ENCODE measurements at regions of chr14 and their contacts with region 1.

Region 1: DNA sequence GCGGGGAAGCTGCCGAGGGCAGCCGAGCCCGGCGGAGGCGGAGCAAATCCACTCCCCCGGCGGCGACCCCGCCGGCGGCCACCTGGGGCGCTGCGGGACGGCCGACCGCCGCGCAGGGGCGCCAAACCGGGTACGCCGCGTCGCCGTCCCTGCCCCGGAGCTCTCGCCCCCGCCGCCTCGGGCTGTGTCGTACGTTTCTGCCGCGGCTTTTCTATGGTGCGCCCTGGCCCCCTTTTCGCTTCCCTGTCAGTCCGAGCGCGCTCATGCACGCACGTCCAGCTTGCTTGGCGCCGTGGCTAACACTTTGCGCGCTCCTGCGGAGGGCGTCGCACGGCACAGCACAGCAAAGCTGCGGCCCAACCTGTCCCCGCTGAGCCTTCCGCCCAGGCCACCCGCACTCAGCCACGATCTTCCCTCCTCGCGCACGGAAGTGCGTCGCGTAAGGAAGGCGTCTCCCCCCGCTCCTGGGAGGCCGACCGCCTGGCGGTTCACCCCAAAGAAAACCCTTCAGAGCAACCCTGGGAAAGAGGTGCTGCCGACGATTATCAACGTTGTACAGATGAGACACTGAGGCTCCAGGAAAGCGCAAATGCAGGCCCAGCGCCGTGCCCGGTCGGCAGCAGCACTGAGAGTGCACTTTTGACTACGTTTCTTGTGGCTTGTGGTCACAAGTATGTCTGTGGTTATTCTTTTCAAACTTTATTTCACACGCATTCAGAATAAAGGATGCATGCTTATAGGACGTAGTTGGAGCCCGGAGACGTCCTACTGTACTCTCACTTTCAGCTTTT is at the start of gene HECTD1:
- DNase-seq: peak; percentile 76 to 96 (median 87)
- ATAC-seq: peak; percentile 69
- H3K4me3 ChIP-seq: peak within 1 kb of the TSS; percentile 77
- H3K4me3 Mint-ChIP-seq: peak within 1 kb of the TSS; percentile 93
- H3K27ac ChIP-seq: peak within 1 kb of the TSS; percentile 93 to 95
- H3K27ac Mint-ChIP-seq: peak within 1 kb of the TSS; percentile 97
- H3K4me1 ChIP-seq: peaks cover 40% of the 10 kb centered on the region
- H3K4me1 Mint-ChIP-seq: peaks cover 67% of the 10 kb centered on the region
- H3K27me3 ChIP-seq: no peaks in the 10 kb centered on the region
- H3K27me3 Mint-ChIP-seq: no peaks in the 10 kb centered on the region
- CTCF ChIP-seq: peak; percentile 74
- total RNA-seq, gene HECTD1: 162 to 168 TPM

Region 2: DNA sequence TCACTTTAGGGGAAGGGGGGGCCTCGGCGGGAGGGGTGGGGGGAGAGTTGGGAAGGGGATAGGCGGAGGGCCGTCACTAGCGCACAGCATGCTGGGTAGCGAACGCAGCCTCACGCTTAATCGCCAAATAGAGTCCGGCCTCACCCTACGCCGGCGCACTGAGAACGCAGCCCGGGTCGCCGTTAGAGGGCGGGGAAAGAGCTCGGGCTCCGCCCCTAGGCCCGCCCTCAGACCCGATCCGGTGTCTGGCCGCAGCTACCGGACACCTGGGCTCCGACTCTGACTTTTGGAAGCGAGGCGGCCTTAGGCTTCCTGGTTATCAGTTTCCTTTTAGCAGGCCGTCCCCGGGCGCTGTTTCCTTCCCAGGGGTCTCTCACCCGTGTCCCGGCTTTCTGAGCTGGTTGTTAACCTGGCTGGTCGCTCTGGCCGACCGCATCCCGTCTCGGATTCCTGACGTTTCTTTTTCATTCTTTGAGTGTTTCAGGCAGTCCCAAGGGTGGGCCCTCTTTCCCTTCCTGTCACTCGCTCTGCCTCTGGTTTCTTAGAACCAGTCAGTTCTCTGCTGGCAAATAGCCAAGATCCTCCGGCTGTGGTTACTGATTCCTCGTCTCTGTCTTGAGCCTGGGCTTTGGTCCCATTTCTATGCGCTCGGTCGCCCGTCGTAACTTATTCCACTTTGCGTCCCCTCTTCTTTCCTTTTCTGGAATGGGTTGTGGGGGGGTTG is 181.4 kb before region 1 on chr14:
- CTCF ChIA-PET with region 1: interaction called, 9 read pairs
- POLR2A ChIA-PET with region 1: interaction called, 63 read pairs
- intact Hi-C with region 1: loop called (anchors 5 to 10 kb)
- DNase-seq: peak; percentile 75 to 96 (median 87)
- ATAC-seq: peak; percentile 85
- H3K4me3 ChIP-seq: peak overlapping the region; percentile 99
- H3K4me3 Mint-ChIP-seq: peak overlapping the region; percentile 98
- H3K27ac ChIP-seq: peak overlapping the region; percentile 87 to 90
- H3K27ac Mint-ChIP-seq: peak overlapping the region; percentile 94
- H3K4me1 ChIP-seq: peaks cover 10% of the 10 kb centered on the region
- H3K4me1 Mint-ChIP-seq: peaks cover 62% of the 10 kb centered on the region
- H3K27me3 ChIP-seq: no peaks in the 10 kb centered on the region
- H3K27me3 Mint-ChIP-seq: no peaks in the 10 kb centered on the region
- CTCF ChIP-seq: no peak

Region 3: DNA sequence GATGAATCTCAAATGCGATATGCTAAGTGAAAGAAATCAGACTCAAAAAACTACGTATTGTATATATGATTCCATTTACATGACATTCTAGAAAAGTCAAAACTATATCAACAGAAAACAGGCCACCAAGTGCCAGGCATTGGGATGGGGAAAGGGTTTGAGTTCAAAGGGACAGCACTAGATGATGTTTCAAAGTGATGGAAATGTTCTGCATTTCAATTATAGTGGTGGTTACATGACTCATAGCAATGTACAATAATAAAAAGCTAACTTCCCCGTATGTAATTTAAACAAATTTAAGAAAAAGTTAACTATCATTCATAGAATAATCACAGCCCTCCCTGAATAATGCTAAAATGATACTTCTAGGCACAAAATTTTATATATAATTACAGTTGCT is 13.9 kb before region 1 on chr14:
- CTCF ChIA-PET with region 1: interaction called, 8 read pairs
- POLR2A ChIA-PET with region 1: interaction called, 20 read pairs
- intact Hi-C with region 1: loop called in 1 of 2 experiments (anchors 2 kb)
- DNase-seq: no peak
- ATAC-seq: no peak
- H3K4me3 ChIP-seq: no peak overlapping the region
- H3K4me3 Mint-ChIP-seq: no peak overlapping the region
- H3K27ac ChIP-seq: no peak overlapping the region
- H3K27ac Mint-ChIP-seq: peak overlapping the region; percentile 25
- H3K4me1 ChIP-seq: peaks cover 20% of the 10 kb centered on the region
- H3K4me1 Mint-ChIP-seq: peaks cover 62% of the 10 kb centered on the region
- H3K27me3 ChIP-seq: no peaks in the 10 kb centered on the region
- H3K27me3 Mint-ChIP-seq: no peaks in the 10 kb centered on the region
- CTCF ChIP-seq: no peak

Region 4: GRCh38 chr14:31326111-31326510 is 118.2 kb after region 1 on chr14:
- CTCF ChIA-PET with region 1: interaction called, 10 read pairs
- POLR2A ChIA-PET with region 1: interaction called, 11 read pairs
- intact Hi-C with region 1: loop called in 1 of 2 experiments (anchors 10 kb)
- DNase-seq: peak in 4 of 14 experiments; percentile 19 to 55 (median 42)
- ATAC-seq: peak; percentile 48
- H3K4me3 ChIP-seq: no peak overlapping the region
- H3K4me3 Mint-ChIP-seq: no peak overlapping the region
- H3K27ac ChIP-seq: no peak overlapping the region
- H3K27ac Mint-ChIP-seq: no peak overlapping the region
- H3K4me1 ChIP-seq: no peaks in the 10 kb centered on the region
- H3K4me1 Mint-ChIP-seq: no peaks in the 10 kb centered on the region
- H3K27me3 ChIP-seq: no peaks in the 10 kb centered on the region
- H3K27me3 Mint-ChIP-seq: no peaks in the 10 kb centered on the region
- CTCF ChIP-seq: peak; percentile 25

Region 5: DNA sequence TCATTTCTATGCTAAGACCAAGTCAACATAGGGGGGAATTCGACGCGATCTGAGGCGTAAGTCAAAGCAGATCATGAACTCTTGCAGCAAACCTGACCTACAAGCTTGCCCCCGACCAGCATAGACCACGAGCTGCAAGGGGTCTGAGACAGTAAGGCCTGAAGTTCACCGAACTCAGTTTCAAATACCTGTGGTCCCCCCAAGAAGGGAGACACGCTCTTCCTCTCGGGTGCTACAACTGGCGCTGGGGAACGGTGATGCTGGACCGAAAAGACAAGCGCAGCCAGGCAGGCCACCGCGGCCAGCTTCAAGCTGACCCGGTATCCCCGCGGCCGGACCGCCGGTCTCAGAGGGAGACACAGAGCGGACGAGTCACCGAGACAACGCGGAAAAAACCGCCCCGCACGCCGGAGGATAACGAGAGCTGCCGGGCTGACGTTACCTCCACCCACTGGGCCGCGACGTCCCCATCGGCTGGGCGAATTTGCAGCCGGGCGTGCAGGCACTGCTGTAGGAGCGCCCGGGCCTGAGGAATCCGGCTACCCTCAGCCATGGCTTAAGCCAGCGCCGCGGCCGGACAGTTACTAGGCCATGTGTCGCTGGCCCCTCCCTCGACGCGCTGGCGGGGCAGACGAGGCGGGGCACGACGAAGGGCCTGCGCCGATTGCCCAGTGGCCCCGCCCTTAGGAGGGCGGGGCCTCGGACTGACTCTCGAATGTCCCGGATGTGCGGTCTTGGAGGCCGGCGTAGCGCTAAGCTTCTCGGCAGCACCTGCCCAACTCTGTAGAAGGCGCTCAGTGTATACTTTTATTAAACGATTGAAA is 249.1 kb after region 1 on chr14 and contains the start of gene DTD2:
- CTCF ChIA-PET with region 1: interaction called, 8 read pairs
- POLR2A ChIA-PET with region 1: interaction called, 17 read pairs
- intact Hi-C with region 1: loop called in 1 of 2 experiments (anchors 10 kb)
- DNase-seq: peak; percentile 85 to 96 (median 91)
- ATAC-seq: peak; percentile 97
- H3K4me3 ChIP-seq: peak within 1 kb of the TSS; percentile 95
- H3K4me3 Mint-ChIP-seq: peak within 1 kb of the TSS; percentile 93
- H3K27ac ChIP-seq: peak within 1 kb of the TSS; percentile 39 to 71
- H3K27ac Mint-ChIP-seq: peak within 1 kb of the TSS; percentile 94
- H3K4me1 ChIP-seq: peaks cover 9% of the 10 kb centered on the region
- H3K4me1 Mint-ChIP-seq: peaks cover 35% of the 10 kb centered on the region
- H3K27me3 ChIP-seq: no peaks in the 10 kb centered on the region
- H3K27me3 Mint-ChIP-seq: no peaks in the 10 kb centered on the region
- CTCF ChIP-seq: no peak
- total RNA-seq, gene DTD2: 4.6 to 5.7 TPM

Region 6: GRCh38 chr14:32202998-32203882 is 995.3 kb after region 1 on chr14 and contains the start of gene RNU6-8:
- CTCF ChIA-PET with region 1: no interaction called
- POLR2A ChIA-PET with region 1: interaction called, 11 read pairs
- intact Hi-C with region 1: loop called (anchors 5 kb)
- DNase-seq: peak; percentile 78 to 94 (median 86)
- ATAC-seq: peak; percentile 81
- H3K4me3 ChIP-seq: peak within 1 kb of the TSS; percentile 85
- H3K4me3 Mint-ChIP-seq: peak within 1 kb of the TSS; percentile 93
- H3K27ac ChIP-seq: peak within 1 kb of the TSS; percentile 90 to 98
- H3K27ac Mint-ChIP-seq: peak within 1 kb of the TSS; percentile 100
- H3K4me1 ChIP-seq: peaks cover 26% of the 10 kb centered on the region
- H3K4me1 Mint-ChIP-seq: peaks cover 30% of the 10 kb centered on the region
- H3K27me3 ChIP-seq: no peaks in the 10 kb centered on the region
- H3K27me3 Mint-ChIP-seq: peaks cover 12% of the 10 kb centered on the region
- CTCF ChIP-seq: no peak
- total RNA-seq, gene RNU6-8: not detected